ENCODE measurements at regions of chr5 and their contacts with region 1.

Region 1: GRCh38 chr5:135139381-135140137 is 105.5 kb upstream of the PITX1 start:
- DNase-seq: peak; percentile 92
- H3K4me3 ChIP-seq: peak overlapping the region; percentile 43
- H3K27ac ChIP-seq: peak overlapping the region; percentile 97
- H3K27me3 ChIP-seq: no peaks in the 10 kb centered on the region
- CTCF ChIP-seq: no peak

Region 2: GRCh38 chr5:135032999-135033897 is 106.3 kb before region 1 on chr5:
- CTCF ChIA-PET with region 1: no interaction called
- POLR2A ChIA-PET with region 1: interaction called, 27 read pairs
- DNase-seq: peak; percentile 10
- H3K4me3 ChIP-seq: peak overlapping the region; percentile 89
- H3K27ac ChIP-seq: peak overlapping the region; percentile 61
- H3K27me3 ChIP-seq: peaks cover 25% of the 10 kb centered on the region
- CTCF ChIP-seq: no peak

Measured in AG04450 (cell line).